ENCODE measurements at regions of chr19 and their contacts with region 1.

Region 1: GRCh38 chr19:48970923-48971395 is 5.8 kb downstream of the FTL start:
- DNase-seq: peak; percentile 81
- H3K4me3 ChIP-seq: no peak overlapping the region
- H3K27ac ChIP-seq: no peak overlapping the region
- H3K4me1 ChIP-seq: no peaks in the 10 kb centered on the region
- H3K27me3 ChIP-seq: no peaks in the 10 kb centered on the region
- CTCF ChIP-seq: peak; percentile 94 to 95
- POLR2A ChIP-seq: no peak

Region 2: DNA sequence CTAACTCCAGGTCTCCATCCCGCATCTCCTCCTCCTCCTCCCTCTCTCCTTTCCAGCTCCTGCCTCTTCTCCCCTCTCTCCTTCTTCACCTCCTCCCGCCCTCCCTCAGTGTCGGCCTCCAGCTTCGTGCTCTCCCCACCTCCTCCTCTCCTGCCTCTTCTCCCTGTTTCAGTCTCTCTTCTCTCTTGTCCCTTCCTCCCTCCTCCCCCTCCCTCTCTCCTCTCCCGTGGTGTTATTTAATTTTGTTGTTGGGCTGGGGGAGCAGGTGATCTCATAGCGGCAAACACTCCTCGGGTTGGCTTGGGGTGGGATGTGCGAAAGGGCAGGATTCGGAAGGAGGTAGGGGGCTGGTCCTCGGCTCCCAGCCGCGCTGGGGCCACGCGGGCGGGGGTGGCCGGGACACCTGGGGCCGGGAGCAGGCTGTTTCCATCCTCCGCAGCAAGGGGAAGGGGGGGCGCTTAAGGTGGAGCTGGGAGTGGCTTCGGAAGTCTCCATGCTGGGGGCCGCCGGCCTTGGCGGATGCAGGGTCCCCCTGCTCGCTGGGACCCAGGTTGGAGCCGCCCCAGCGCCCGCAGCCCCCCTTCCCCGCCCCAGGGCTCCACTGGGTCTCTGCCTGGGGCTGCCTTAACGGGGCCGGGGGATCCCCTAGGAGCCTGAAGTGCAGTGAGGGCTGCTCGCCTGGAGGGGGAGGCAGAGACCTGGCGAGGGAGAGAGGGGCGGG is 324.8 kb before region 1 on chr19 and contains the start of gene CA11:
- CTCF ChIA-PET with region 1: interaction called, 15 read pairs
- POLR2A ChIA-PET with region 1: no interaction called
- dilution Hi-C with region 1: no loop called
- intact Hi-C with region 1: no loop called
- DNase-seq: peak; percentile 84
- H3K4me3 ChIP-seq: peak within 1 kb of the TSS; percentile 40 to 46 (median 46)
- H3K27ac ChIP-seq: no peak within 1 kb of the TSS
- H3K4me1 ChIP-seq: peaks cover 9% of the 10 kb centered on the region
- H3K27me3 ChIP-seq: peaks cover 0 to 2% of the 10 kb centered on the region in 2 experiments
- CTCF ChIP-seq: peak; percentile 68 to 89
- POLR2A ChIP-seq: no peak
- total RNA-seq, gene CA11: 2.8 TPM in 2 replicates

Region 3: GRCh38 chr19:48812094-48812929 is 158.6 kb before region 1 on chr19:
- CTCF ChIA-PET with region 1: interaction called, 11 read pairs
- POLR2A ChIA-PET with region 1: no interaction called
- dilution Hi-C with region 1: no loop called
- intact Hi-C with region 1: no loop called
- DNase-seq: peak; percentile 72
- H3K4me3 ChIP-seq: peak overlapping the region; percentile 12 to 29 (median 20)
- H3K27ac ChIP-seq: no peak overlapping the region
- H3K4me1 ChIP-seq: peaks cover 13% of the 10 kb centered on the region
- H3K27me3 ChIP-seq: no peaks in the 10 kb centered on the region
- CTCF ChIP-seq: no peak
- POLR2A ChIP-seq: peak; percentile 49

Region 4: DNA sequence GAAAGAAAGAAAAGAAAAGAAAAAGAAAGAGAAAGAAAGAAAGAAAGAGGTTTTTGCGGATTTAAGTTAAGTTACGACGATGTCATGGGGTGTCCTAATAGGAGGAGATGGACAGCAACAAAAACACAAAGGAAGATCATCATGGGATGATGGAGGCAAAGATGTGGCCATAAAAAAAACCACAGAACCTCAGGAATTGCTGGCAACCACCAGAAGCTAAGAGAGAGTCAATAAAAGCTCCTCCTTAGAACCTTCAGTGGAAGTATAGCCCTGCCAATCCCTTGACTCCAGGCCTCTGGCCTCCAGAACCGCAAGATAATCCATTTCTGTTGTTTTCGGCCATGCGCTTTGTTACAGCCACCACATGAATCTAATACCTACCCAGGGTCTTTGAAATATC is 114.0 kb before region 1 on chr19:
- CTCF ChIA-PET with region 1: interaction called, 21 read pairs
- POLR2A ChIA-PET with region 1: no interaction called
- dilution Hi-C with region 1: no loop called
- intact Hi-C with region 1: no loop called
- DNase-seq: no peak
- H3K4me3 ChIP-seq: no peak overlapping the region
- H3K27ac ChIP-seq: no peak overlapping the region
- H3K4me1 ChIP-seq: no peaks in the 10 kb centered on the region
- H3K27me3 ChIP-seq: no peaks in the 10 kb centered on the region
- CTCF ChIP-seq: no peak
- POLR2A ChIP-seq: no peak

Region 5: DNA sequence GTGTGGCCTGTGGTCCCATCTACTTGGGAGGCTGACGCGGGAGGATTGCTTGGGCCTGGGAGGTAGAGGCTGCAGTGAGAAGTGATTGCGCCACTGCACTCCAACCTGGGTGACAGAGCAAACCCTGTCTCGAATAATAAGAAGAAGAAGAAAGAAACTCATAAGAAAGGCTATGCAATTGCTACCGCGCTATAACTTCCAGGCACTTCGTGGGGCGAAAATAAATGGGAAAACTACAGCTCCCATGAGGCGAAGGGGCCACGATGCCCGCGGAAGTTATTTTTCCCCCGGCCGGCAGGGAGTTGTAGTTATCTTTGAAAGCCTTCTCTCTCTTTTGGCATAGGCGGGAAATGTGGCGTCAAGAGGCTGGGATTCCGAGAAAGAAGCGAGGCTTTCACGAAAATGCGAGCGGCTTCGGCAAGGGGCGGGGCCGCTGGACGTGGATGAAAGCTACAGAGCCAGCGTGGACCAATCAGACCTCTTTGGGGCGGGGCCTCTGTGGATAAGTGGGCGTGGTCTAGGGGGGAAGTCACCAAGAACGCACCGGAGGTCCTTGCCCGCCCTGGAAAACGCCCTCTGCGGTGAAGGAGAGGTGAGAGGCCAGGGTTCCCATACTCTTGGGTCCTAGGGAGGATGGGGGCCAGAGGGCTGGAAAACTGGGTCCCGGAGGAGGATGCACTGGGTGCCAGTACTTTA is 71.0 kb before region 1 on chr19 and contains the start of gene NUCB1:
- CTCF ChIA-PET with region 1: interaction called, 27 read pairs
- POLR2A ChIA-PET with region 1: interaction called, 3 read pairs
- dilution Hi-C with region 1: no loop called
- intact Hi-C with region 1: no loop called
- DNase-seq: peak; percentile 99
- H3K4me3 ChIP-seq: peak within 1 kb of the TSS; percentile 62 to 84 (median 67)
- H3K27ac ChIP-seq: peak within 1 kb of the TSS; percentile 49
- H3K4me1 ChIP-seq: peaks cover 12% of the 10 kb centered on the region
- H3K27me3 ChIP-seq: peaks cover 2 to 7% of the 10 kb centered on the region in 2 experiments
- CTCF ChIP-seq: peak in 1 of 2 donors; percentile 33
- POLR2A ChIP-seq: peak; percentile 30
- total RNA-seq, gene NUCB1: 190 and 194 TPM in 2 replicates

Region 6: DNA sequence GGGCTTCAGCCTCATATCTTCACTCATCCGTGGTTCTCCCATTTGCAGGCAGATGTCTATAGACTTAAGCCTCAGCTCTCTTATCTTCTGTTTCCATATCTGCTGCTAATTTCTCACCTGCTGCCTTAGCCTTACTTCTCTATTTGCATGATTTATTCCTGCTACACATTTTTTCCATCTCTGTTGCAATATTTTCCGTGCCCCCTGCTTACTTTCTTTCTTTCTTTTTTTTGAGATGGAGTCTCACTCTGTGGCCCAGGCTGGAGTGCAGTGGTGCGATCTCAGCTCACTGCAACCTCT is 16.4 kb after region 1 on chr19:
- CTCF ChIA-PET with region 1: interaction called, 41 read pairs
- POLR2A ChIA-PET with region 1: no interaction called
- dilution Hi-C with region 1: no loop called
- intact Hi-C with region 1: no loop called
- DNase-seq: no peak
- H3K4me3 ChIP-seq: no peak overlapping the region
- H3K27ac ChIP-seq: no peak overlapping the region
- H3K4me1 ChIP-seq: peaks cover 7% of the 10 kb centered on the region
- H3K27me3 ChIP-seq: no peaks in the 10 kb centered on the region
- CTCF ChIP-seq: no peak
- POLR2A ChIP-seq: no peak

Measured in endothelial cell of umbilical vein (primary cell).